Head of caudate nucleus (tissue), 42 donors: ENCODE measurements at regions of chr19 and their contacts with region 1.

Region 1: DNA sequence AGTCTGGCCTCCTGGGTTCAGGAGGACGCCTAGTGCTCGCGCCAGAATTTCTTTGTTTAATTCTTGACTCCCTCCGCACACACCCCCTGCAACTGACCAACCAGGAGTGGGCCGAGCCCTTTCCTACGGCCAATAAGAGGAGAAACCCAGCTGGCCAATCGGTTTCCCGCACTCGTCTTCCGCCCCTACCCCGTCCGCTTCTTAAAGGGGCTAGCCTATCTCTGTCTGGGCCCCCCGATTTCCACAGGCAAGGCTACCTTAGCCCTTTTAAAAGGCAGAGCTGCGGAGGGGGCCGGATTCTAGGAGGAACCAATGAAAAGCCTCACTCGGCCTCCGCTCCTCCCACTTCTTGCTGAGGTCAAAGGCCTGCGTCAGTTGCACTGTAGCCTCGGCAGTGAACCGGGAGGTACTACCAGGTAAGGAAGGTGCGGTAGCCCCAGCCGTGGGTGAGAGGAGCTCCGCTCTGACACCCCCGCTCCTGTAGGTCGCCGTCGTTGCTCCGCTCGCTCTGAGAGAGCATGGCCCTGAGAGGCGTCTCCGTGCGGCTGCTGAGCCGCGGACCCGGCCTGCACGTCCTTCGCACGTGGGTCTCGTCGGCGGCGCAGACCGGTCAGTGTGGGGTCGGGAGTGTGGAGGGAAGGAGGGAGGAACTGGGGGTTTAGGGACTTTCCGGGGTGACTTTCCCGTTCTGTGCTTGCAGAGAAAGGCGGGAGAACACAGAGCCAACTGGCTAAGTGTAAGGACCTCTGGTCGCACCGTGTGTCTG is at the start of gene GCDH:
- DNase-seq: peak; percentile 92 to 100 (median 99)

Region 2: GRCh38 chr19:12757544-12758274 is 133.3 kb before region 1 on chr19:
- intact Hi-C with region 1: no loop called
- DNase-seq: peak; percentile 29 to 84 (median 64)

Region 3: GRCh38 chr19:12933287-12934072 is 42.5 kb after region 1 on chr19 and contains the start of gene FARSA:
- intact Hi-C with region 1: loop called (anchors 5 kb)
- DNase-seq: peak; percentile 92 to 99 (median 96)

Region 4: DNA sequence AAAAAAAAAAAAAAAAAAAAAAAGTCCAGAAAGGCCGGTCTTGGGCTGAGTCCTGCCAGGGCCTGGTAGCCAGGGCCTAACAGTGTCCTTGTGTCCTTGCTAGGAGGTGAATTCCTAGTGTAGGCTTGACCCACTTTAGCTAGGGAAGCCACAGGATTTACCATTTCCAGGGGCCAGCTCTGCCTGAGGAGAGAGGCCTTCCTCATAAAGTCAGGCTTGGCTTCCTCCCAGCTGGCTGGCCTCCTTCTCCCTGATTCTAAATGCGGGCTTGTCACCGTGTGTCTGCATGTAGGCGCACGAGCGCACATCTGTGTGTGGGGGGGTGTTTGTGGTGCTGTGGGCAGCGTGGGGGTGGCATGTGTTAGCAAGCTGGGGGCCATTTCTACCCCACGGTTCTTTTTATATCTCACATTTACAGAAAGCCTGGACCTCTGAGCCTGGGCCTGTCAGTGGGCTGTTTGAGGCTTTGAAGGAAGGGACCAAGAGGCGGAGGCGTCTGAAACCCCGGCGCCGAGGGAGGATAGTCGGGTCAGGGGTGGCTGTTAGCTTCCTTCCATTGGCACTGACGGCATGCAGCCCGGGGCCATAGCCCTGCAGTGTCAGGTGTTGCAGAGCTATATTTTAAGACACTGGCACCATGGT is 290.9 kb after region 1 on chr19:
- intact Hi-C with region 1: no loop called
- DNase-seq: peak in 40 of 42 donors; percentile 32 to 75 (median 54)